ENCODE measurements at regions of chr7 and their contacts with region 1.

Region 1: DNA sequence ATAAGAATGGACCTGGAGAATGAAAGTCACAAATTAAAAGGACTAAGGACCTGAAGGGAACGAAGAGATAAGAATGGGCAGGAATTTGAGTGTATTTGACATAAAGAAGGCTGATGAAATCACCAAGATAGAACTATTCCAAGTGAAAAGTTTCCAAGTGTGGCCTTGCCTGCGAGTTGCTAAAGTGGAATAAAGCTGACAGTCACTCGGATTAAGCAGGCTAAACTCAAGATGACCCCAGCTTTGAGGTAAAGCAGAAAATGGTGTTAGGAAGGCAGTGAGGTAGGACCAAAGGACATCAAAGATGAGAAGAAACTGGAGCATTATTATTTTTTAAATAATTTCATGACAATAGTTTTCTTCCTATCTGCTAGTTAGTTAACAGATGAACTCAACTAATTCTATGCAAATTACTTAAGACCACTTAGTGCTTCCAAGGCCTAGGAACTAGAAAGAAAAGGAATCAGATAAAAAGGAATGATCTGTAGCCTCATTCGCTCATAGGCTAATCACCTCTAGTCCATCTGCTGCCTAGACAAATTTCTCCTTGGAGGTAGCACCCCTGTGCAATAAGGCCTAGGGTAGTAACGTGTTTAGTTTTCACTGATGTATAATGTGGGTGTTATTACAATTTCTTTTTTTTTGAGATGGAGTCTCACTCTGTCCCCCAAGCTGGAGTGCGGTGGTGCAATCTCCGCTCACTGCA is 34.5 kb downstream of the EZH2 start:
- DNase-seq: no peak
- H3K4me3 Mint-ChIP-seq: no peak overlapping the region
- H3K27ac Mint-ChIP-seq: peak overlapping the region; percentile 31
- H3K4me1 Mint-ChIP-seq: peaks cover 61% of the 10 kb centered on the region
- H3K27me3 Mint-ChIP-seq: no peaks in the 10 kb centered on the region

Region 2: GRCh38 chr7:148884299-148885022 is 34.9 kb after region 1 on chr7:
- intact Hi-C with region 1: loop called (anchors 5 kb)
- DNase-seq: peak; percentile 92
- H3K4me3 Mint-ChIP-seq: peak overlapping the region; percentile 94
- H3K27ac Mint-ChIP-seq: peak overlapping the region; percentile 98
- H3K4me1 Mint-ChIP-seq: peaks cover 29% of the 10 kb centered on the region
- H3K27me3 Mint-ChIP-seq: no peaks in the 10 kb centered on the region

Region 3: DNA sequence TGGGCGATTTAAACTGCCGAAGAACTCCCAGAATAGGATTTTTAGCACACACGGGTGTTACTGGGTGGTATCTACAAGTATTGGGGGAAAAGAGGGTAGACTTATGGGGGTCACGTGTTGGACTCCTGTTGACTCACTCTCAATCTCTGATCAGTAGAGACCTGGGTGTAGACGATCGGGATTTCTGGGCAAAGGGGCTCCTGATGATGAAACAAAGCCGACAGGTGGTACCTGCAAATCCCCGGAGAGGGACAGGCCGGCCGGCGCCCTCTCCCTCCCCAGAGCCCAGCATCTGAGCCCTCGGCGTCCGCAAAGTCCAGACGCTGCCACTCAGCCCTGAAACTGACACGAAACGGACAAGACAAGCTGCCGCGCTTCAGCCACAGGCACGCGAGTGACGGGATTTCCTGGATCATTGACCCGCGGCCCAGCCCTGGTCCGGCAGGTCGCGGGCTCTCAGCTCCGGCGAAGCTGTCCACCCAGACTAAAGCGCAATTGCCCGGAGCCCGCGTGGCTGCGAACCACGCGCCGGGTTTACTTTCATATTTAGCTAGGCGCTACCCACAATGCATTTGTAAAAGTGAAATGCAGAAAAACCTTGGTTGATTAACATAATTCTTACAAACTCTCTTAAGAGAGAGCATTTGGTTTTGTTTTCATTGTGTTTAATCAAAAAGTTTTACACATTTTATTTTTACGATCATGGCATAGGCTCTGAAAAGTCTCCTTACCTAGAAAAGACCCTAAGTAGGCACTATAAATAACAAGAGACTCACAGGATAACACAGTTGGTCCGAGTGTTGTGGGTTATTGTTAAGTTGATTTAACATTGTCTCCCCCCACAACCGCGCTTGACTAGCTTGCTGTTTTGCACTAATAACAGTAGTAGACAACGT is 91.4 kb after region 1 on chr7:
- intact Hi-C with region 1: no loop called
- DNase-seq: peak; percentile 66
- H3K4me3 Mint-ChIP-seq: peak overlapping the region; percentile 94
- H3K27ac Mint-ChIP-seq: peak overlapping the region; percentile 99
- H3K4me1 Mint-ChIP-seq: peaks cover 20% of the 10 kb centered on the region
- H3K27me3 Mint-ChIP-seq: no peaks in the 10 kb centered on the region

Region 4: GRCh38 chr7:149220539-149220938 is 371.0 kb after region 1 on chr7:
- intact Hi-C with region 1: no loop called
- DNase-seq: no peak
- H3K4me3 Mint-ChIP-seq: no peak overlapping the region
- H3K27ac Mint-ChIP-seq: no peak overlapping the region
- H3K4me1 Mint-ChIP-seq: peaks cover 1% of the 10 kb centered on the region
- H3K27me3 Mint-ChIP-seq: no peaks in the 10 kb centered on the region

Region 5: GRCh38 chr7:149489391-149490024 is 640.0 kb after region 1 on chr7:
- intact Hi-C with region 1: no loop called
- DNase-seq: no peak
- H3K4me3 Mint-ChIP-seq: no peak overlapping the region
- H3K27ac Mint-ChIP-seq: no peak overlapping the region
- H3K4me1 Mint-ChIP-seq: peaks cover 5% of the 10 kb centered on the region
- H3K27me3 Mint-ChIP-seq: no peaks in the 10 kb centered on the region